ENCODE measurements at regions of chr1 and their contacts with region 1.

Region 1: DNA sequence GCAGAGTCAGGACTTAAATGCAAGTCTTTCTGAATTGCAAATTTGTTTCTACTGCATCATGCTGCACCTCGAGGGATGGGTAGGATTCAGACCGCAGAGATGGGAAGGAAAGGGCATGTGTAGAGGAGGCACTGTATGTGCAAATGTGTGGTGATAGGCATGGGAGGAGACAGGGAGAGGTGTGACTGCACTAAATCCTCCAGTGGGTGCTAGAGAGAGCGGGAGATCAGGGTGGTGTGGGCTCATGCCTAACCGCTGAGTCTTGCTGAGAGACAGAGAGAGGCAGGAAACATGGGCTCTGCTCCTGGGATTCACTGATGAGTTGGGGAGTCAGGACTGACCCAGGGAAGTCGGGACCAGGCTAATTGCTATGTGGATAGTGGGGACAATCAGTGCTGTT is 61.1 kb downstream of the PTPRU start:
- DNase-seq: no peak
- H3K4me3 ChIP-seq: no peak overlapping the region
- H3K27ac ChIP-seq: no peak overlapping the region
- H3K4me1 ChIP-seq: no peaks in the 10 kb centered on the region
- H3K27me3 ChIP-seq: no peaks in the 10 kb centered on the region
- CTCF ChIP-seq: no peak

Region 2: DNA sequence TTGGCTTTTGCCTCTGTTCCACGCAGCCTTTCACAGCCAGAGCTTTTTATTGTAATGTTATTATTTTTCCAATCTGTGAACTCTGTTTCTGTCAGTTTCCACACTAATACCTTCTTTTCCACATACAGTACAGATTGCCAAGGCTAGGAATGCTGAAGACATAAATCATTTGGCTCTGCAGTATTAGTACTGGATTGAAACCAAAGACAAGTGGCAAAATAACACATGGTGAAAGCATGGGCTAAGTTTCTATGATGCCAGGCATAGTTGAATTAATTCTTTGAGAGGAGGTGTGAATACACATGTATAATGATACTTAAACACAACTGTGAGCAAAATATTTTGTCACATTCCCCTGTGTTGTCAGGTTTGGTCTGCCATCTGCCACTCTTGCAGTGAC is 247.3 kb before region 1 on chr1:
- CTCF ChIA-PET with region 1: no interaction called
- POLR2A ChIA-PET with region 1: interaction called, 11 read pairs
- intact Hi-C with region 1: no loop called
- DNase-seq: no peak
- H3K4me3 ChIP-seq: no peak overlapping the region
- H3K27ac ChIP-seq: no peak overlapping the region
- H3K4me1 ChIP-seq: no peaks in the 10 kb centered on the region
- H3K27me3 ChIP-seq: no peaks in the 10 kb centered on the region
- CTCF ChIP-seq: no peak